ENCODE measurements at regions of chrX and their contacts with region 1.

Region 1: DNA sequence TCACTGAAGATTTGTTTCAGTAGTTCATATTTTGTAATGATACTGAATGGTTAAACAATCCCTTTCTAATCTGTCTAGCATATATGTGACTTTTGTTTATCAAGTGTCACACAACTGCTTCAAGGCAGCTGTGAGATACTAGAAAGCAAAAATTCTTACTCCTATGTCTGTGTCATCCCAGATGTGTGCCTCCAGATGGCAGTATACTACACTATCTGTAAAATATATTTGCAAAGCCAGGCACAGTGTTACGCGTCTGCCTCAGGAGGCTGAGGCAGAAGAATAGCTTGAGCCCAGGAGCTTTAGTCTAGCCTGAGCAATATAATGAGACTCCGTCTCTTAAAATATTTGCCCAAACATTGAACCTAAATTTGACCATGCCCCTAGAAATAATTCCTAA is 4.0 kb downstream of the NUDT10 start:
- DNase-seq: peak; percentile 22 to 47
- ATAC-seq: peak; percentile 65 to 84
- H3K4me3 ChIP-seq: no peak overlapping the region
- H3K27ac ChIP-seq: no peak overlapping the region
- H3K4me1 ChIP-seq: no peaks in the 10 kb centered on the region
- CTCF ChIP-seq: peak; percentile 41
- EP300 ChIP-seq: no peak
- POLR2A ChIP-seq: no peak
- RAD21 ChIP-seq: peak; percentile 20 to 42; a peak in 2 of 5 replicates

Region 2: DNA sequence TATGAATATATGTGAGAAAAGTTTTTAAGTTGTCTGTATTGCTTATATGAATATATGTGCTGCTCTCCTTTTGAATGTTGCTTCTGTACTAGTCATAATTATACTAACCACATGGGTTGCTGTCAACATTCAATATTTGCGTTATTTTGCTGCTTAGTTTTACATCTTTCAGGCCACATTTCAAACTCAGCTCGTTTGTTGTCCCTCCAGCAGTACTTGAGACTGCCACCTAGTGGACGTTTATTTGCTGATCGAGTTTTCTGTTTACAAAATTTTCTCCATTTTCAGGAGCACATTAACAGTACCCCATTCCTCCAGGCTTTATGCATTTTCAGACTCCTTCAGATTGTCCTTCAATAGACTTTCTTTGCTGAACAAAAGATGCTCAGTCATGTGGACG is 84.0 kb after region 1 on chrX:
- CTCF ChIA-PET with region 1: interaction called, 15 read pairs
- POLR2A ChIA-PET with region 1: no interaction called
- DNase-seq: peak; percentile 3 to 43
- ATAC-seq: no peak
- H3K4me3 ChIP-seq: no peak overlapping the region
- H3K27ac ChIP-seq: no peak overlapping the region
- H3K4me1 ChIP-seq: no peaks in the 10 kb centered on the region
- CTCF ChIP-seq: peak; percentile 57
- EP300 ChIP-seq: no peak
- POLR2A ChIP-seq: no peak
- RAD21 ChIP-seq: peak; percentile 39 to 54; a peak in 3 of 5 replicates